Vagina (tissue), 2 donors: ENCODE measurements at regions of chr13 and their contacts with region 1.

Region 1: GRCh38 chr13:48761256-48761655 is 107.5 kb downstream of the CYSLTR2 start:
- DNase-seq: no peak
- H3K4me3 ChIP-seq: no peak overlapping the region
- H3K27ac ChIP-seq: no peak overlapping the region
- H3K4me1 ChIP-seq: no peaks in the 10 kb centered on the region
- H3K27me3 ChIP-seq: no peaks in the 10 kb centered on the region
- CTCF ChIP-seq: no peak
- POLR2A ChIP-seq: no peak

Region 2: DNA sequence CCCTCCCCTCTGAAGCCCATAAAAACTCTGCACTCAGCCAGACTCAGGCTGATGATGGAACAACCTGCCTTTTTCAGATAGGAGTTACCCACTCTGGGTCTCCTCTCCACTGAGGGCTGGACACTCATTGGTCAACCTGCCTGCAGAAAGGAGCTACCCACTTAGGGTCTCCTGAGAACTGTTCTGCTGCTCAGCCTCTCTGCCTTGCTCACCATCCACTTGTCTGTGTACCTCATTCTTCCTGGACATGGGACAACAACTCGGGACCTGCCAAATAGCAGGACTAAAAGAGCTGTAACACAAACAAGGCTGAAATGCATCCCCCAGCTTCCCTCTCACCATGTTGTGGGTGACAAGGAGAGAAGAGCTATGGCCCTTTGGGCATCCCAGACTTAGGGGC is 209.9 kb before region 1 on chr13:
- intact Hi-C with region 1: no loop called
- DNase-seq: no peak
- H3K4me3 ChIP-seq: no peak overlapping the region
- H3K27ac ChIP-seq: no peak overlapping the region
- H3K4me1 ChIP-seq: no peaks in the 10 kb centered on the region
- H3K27me3 ChIP-seq: no peaks in the 10 kb centered on the region
- CTCF ChIP-seq: no peak
- POLR2A ChIP-seq: no peak

Region 3: GRCh38 chr13:48562296-48563066 is 198.8 kb before region 1 on chr13:
- intact Hi-C with region 1: no loop called
- DNase-seq: no peak
- H3K4me3 ChIP-seq: no peak overlapping the region
- H3K27ac ChIP-seq: no peak overlapping the region
- H3K4me1 ChIP-seq: peaks cover 12% of the 10 kb centered on the region
- H3K27me3 ChIP-seq: no peaks in the 10 kb centered on the region
- CTCF ChIP-seq: no peak
- POLR2A ChIP-seq: no peak

Region 4: DNA sequence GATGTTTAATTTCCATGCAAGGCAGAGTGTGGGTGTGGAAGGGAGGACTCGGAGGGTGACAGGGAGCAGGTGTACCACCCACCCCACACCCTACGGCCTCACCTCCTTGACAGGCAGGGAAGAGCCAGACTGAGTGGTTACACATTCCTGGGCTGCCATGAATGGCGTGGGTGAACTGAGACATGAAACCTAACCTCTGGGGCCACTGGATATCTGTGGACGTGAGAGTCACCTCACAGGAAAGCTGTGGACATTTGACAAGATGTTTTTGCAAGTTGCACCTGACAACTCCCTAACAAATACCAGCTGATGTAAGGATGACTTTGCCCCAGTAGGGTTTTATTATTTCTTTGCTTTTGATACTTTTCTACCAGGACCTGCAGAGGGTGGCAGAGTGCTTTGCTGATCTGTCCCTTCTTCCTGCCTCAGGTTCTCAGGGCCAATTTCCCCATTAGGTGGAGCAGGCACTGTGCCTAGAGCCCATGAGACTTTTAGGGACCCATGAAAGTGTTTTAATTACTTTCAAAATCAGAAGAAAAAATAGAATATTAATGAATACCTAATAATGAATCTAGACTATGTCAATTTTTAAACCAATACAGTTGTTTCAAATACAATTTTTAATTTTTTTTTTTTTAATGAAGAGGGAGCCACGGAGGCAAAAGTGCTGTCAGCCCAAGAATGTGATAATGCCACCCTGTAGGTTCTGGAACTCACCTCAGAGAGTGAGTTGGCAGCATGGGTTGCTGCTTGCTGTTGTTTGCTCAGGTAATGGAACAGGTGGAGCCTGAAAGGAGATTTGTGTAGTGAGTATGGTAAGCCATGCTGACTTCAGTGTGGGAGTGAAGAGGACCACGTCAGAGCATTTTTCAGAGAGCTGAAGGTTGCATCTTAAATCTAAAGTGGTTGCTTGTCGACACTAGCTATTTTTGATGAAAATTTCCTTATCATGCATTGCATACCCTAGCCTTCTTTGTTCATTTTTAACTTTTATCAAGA is 165.5 kb before region 1 on chr13:
- intact Hi-C with region 1: loop called (anchors 5 kb)
- DNase-seq: no peak
- H3K4me3 ChIP-seq: no peak overlapping the region
- H3K27ac ChIP-seq: no peak overlapping the region
- H3K4me1 ChIP-seq: peaks cover 11% of the 10 kb centered on the region
- H3K27me3 ChIP-seq: no peaks in the 10 kb centered on the region
- CTCF ChIP-seq: peak in 2 of 3 experiments; percentile 28 to 34
- POLR2A ChIP-seq: no peak